ENCODE measurements at regions of chr2 and their contacts with region 1.

Region 1: GRCh38 chr2:174729797-174730697 is 34.2 kb downstream of the CHRNA1 start:
- DNase-seq: peak; percentile 26
- H3K4me3 Mint-ChIP-seq: peak overlapping the region; percentile 84
- H3K27ac Mint-ChIP-seq: no peak overlapping the region
- H3K4me1 Mint-ChIP-seq: peaks cover 22% of the 10 kb centered on the region
- H3K27me3 Mint-ChIP-seq: peaks cover 44% of the 10 kb centered on the region

Region 2: GRCh38 chr2:174708713-174709112 is 21.3 kb before region 1 on chr2:
- intact Hi-C with region 1: loop called (anchors 1 kb)
- DNase-seq: no peak
- H3K4me3 Mint-ChIP-seq: no peak overlapping the region
- H3K27ac Mint-ChIP-seq: no peak overlapping the region
- H3K4me1 Mint-ChIP-seq: no peaks in the 10 kb centered on the region
- H3K27me3 Mint-ChIP-seq: peaks cover 25% of the 10 kb centered on the region